ENCODE measurements at regions of chr1 and their contacts with region 1.

Region 1: DNA sequence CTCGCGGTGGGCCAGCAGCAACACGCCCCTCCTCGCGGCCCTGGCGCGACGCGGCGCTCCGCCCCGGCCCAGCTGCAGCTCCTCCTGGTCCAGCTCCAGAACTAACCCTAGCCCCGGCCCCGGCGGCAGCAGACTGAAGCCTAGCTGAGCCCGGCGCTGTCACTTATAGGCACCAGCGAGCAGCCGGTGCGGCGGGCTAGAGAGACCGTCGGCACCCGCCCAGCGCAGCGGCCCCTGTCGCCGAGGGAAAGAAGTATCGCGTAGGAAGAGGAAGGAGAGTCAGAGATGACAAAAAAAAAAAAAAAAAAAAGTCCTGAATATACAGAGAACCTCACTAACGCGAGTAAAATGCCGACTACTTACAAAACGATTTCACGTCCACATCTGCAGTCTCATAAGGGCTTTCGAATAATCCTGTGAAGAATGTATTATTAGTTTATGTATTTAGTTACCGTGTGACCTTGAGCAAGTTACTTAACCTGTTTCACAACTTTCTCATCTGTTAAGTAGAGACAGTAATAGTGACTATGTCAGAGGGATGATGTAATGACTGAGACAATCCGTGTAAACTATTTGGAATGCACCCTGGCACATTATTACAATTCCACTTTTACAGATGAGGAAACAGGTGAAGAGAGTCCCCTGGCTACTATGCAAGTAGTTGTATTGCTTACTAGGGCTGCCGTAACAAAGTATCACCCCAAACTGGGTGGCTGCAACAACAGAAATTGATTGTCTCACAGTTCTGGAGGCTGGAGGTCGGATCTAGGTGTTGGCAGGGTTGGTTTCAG is at the start of gene SLC9A1:
- DNase-seq: peak; percentile 73 to 99
- H3K4me3 ChIP-seq: peak within 1 kb of the TSS; percentile 52 to 82 (median 70)
- H3K27ac ChIP-seq: peak within 1 kb of the TSS; percentile 26; the same call in 1 of the 2 replicates
- H3K4me1 ChIP-seq: peaks cover 2 to 15% (median 11%) of the 10 kb centered on the region in 4 experiments
- H3K27me3 ChIP-seq: no peaks in the 10 kb centered on the region; a peak in 1 of 7 replicates
- CTCF ChIP-seq: peak; percentile 77 to 89 (median 83)
- EP300 ChIP-seq: peak in 1 of 2 experiments; percentile 80; a peak in 1 of 3 replicates
- POLR2A ChIP-seq: peak; percentile 99 to 100
- RAD21 ChIP-seq: peak in 1 of 2 experiments; percentile 30; a peak in 2 of 4 replicates
- total RNA-seq, gene SLC9A1: 25.1 and 25.5 TPM in 2 replicates

Region 2: DNA sequence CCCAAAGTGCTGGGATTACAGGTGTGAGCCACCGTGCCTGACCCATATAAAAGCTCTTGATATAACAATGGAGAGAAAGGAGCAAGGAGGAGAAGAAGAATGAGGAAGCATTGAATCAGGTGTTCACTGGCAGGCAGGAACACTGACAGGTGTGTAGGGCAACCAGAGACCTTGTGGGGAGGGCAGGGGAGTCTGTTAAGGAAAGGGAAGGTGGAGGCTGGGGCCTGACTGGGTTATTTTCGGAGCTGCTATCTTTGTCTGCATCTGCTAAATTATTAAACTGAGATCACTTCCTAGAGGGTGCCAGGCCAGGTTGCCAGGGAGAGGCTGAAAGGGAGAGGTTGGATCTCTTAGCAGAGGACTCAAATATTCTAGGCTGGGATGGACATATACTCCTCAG is 168.5 kb before region 1 on chr1:
- CTCF ChIA-PET with region 1: no interaction called
- POLR2A ChIA-PET with region 1: no interaction called
- DNase-seq: no peak
- H3K4me3 ChIP-seq: no peak overlapping the region
- H3K27ac ChIP-seq: no peak overlapping the region
- H3K4me1 ChIP-seq: peaks cover 0 to 7% (median 3%) of the 10 kb centered on the region in 4 experiments; a peak in 4 of 7 replicates
- H3K27me3 ChIP-seq: no peaks in the 10 kb centered on the region; a peak in 1 of 7 replicates
- CTCF ChIP-seq: no peak
- EP300 ChIP-seq: no peak
- POLR2A ChIP-seq: no peak
- RAD21 ChIP-seq: no peak

Region 3: GRCh38 chr1:27122652-27123051 is 32.5 kb before region 1 on chr1:
- CTCF ChIA-PET with region 1: interaction called, 7 read pairs
- POLR2A ChIA-PET with region 1: interaction called, 18 read pairs
- DNase-seq: no peak
- H3K4me3 ChIP-seq: no peak overlapping the region
- H3K27ac ChIP-seq: no peak overlapping the region
- H3K4me1 ChIP-seq: peaks cover 0 to 9% (median 3%) of the 10 kb centered on the region in 4 experiments; a peak in 3 of 7 replicates
- H3K27me3 ChIP-seq: no peaks in the 10 kb centered on the region
- CTCF ChIP-seq: no peak
- EP300 ChIP-seq: no peak
- POLR2A ChIP-seq: no peak
- RAD21 ChIP-seq: no peak

Region 4: DNA sequence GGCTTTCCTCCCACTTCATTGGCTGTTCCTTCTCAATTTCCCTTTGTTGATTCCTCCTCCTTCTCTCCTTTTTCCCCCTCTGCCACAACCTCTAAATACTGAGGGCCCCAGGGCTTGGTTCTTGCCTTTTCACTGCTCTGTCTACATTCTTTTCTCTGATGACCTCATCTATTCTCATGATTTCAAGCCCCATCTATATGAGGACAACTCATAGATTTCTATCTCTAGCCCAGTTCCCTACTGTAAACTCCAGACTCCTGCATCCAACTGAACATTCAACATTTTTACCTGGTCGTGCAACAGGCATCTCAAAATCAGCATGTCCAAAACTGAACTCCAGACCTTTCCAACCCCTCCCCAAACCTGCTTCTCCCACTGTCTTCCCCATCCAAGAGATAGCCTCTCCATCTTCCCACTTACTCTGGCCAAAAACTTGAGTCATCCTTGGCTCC is 11.2 kb after region 1 on chr1:
- CTCF ChIA-PET with region 1: interaction called, 18 read pairs
- POLR2A ChIA-PET with region 1: interaction called, 47 read pairs
- DNase-seq: no peak
- H3K4me3 ChIP-seq: no peak overlapping the region
- H3K27ac ChIP-seq: no peak overlapping the region
- H3K4me1 ChIP-seq: no peaks in the 10 kb centered on the region
- H3K27me3 ChIP-seq: no peaks in the 10 kb centered on the region
- CTCF ChIP-seq: no peak
- EP300 ChIP-seq: no peak
- POLR2A ChIP-seq: no peak
- RAD21 ChIP-seq: no peak

Measured in H1 (cell line).